MCF 10A (cell line): ENCODE measurements at regions of chr2 and their contacts with region 1.

Region 1: DNA sequence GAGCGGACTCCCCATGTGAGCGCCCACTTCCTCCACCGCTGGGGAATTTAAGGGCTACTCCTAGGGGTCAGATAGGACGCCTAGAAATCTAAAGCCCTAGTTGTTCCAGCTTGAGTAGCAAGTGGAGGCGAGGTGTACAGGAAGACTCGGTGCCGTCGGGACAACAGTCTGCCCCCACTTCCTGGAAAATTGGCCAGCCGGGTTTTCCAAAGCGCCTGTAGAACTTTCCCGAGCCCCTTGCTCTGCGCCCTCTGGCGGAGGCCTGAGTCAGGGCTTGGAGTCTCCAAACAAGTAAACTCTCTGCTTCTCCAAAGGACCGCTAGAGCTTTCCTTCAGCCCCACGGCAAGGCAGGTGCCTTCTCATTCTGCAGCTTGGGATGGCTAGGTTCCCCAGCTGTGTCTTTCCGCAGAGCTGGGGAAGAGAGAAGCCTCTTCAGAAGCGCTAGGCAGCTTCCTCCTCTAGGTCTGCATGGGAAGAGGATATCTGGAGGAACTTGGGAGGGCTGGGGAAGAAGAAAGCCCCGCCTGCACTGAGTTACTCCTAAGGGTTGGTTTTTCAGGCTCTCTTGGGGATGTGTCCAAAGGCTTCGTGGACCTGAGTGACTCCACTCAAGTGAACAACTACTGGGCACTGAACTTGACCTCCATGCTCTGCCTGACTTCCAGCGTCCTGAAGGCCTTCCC is 688 bp downstream of the SPR start:
- DNase-seq: peak; percentile 92
- H3K4me3 Mint-ChIP-seq: peak overlapping the region; percentile 75
- H3K27ac Mint-ChIP-seq: no peak overlapping the region
- H3K4me1 Mint-ChIP-seq: peaks cover 26% of the 10 kb centered on the region
- H3K27me3 Mint-ChIP-seq: no peaks in the 10 kb centered on the region
- CTCF ChIP-seq: peak; percentile 75

Region 2: GRCh38 chr2:71530641-71531332 is 1357.1 kb before region 1 on chr2:
- CTCF ChIA-PET with region 1: no interaction called
- POLR2A ChIA-PET with region 1: no interaction called
- intact Hi-C with region 1: loop called (anchors 5 kb)
- DNase-seq: peak; percentile 58
- H3K4me3 Mint-ChIP-seq: no peak overlapping the region
- H3K27ac Mint-ChIP-seq: no peak overlapping the region
- H3K4me1 Mint-ChIP-seq: peaks cover 4% of the 10 kb centered on the region
- H3K27me3 Mint-ChIP-seq: peaks cover 28% of the 10 kb centered on the region
- CTCF ChIP-seq: peak; percentile 58

Region 3: DNA sequence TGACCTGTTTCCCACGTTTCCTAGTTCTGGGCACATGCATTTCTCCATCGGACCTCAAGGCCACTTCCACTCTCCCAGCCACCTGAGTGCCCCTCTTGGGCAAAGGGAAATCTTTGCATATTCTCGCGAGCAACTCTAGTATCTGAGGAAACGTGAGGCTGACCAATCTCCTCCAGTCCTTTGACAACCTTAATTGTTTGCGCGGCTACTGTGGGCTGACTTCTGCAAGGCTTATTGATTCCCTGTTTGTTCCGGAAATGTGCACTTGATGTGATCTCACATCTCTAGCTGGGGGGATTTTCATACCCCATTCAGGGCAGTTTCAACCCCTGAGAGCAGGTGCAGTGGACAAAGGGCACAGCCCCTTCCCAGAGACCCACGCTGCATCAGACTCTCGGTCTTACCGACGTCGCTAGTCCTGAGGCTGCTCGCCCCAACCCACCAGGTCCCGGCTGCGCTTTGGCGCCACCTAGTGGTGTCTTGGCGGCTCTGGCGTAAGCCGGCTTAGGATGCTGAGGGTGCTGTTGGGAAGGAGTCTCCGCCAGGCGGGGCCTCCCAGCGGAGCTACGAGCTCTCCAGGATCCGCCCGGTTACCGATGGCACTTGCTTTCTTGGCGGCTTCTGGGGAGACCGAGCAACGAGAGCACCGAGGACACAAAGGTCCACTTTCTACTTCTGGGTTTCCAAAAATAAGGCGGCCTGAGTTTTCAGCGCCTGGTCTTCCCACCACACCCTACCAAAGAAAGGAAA is 25.5 kb before region 1 on chr2:
- CTCF ChIA-PET with region 1: interaction called, 45 read pairs
- POLR2A ChIA-PET with region 1: interaction called, 6 read pairs
- intact Hi-C with region 1: no loop called
- DNase-seq: peak; percentile 89
- H3K4me3 Mint-ChIP-seq: peak overlapping the region; percentile 41
- H3K27ac Mint-ChIP-seq: no peak overlapping the region
- H3K4me1 Mint-ChIP-seq: peaks cover 7% of the 10 kb centered on the region
- H3K27me3 Mint-ChIP-seq: peaks cover 28% of the 10 kb centered on the region
- CTCF ChIP-seq: peak; percentile 87

Region 4: GRCh38 chr2:72901426-72901825 is 13.5 kb after region 1 on chr2:
- CTCF ChIA-PET with region 1: interaction called, 20 read pairs
- POLR2A ChIA-PET with region 1: no interaction called
- intact Hi-C with region 1: no loop called
- DNase-seq: no peak
- H3K4me3 Mint-ChIP-seq: no peak overlapping the region
- H3K27ac Mint-ChIP-seq: no peak overlapping the region
- H3K4me1 Mint-ChIP-seq: no peaks in the 10 kb centered on the region
- H3K27me3 Mint-ChIP-seq: peaks cover 57% of the 10 kb centered on the region
- CTCF ChIP-seq: no peak

Region 5: GRCh38 chr2:72934683-72935610 is 47.1 kb after region 1 on chr2:
- CTCF ChIA-PET with region 1: interaction called, 3 read pairs
- POLR2A ChIA-PET with region 1: no interaction called
- intact Hi-C with region 1: loop called (anchors 1 kb)
- DNase-seq: peak; percentile 57
- H3K4me3 Mint-ChIP-seq: no peak overlapping the region
- H3K27ac Mint-ChIP-seq: no peak overlapping the region
- H3K4me1 Mint-ChIP-seq: no peaks in the 10 kb centered on the region
- H3K27me3 Mint-ChIP-seq: no peaks in the 10 kb centered on the region
- CTCF ChIP-seq: peak; percentile 43

Region 6: GRCh38 chr2:73071360-73072133 is 183.7 kb after region 1 on chr2 and contains the start of gene SFXN5:
- CTCF ChIA-PET with region 1: interaction called, 4 read pairs
- POLR2A ChIA-PET with region 1: no interaction called
- intact Hi-C with region 1: loop called (anchors 5 kb)
- DNase-seq: peak; percentile 97
- H3K4me3 Mint-ChIP-seq: peak within 1 kb of the TSS; percentile 88
- H3K27ac Mint-ChIP-seq: peak within 1 kb of the TSS; percentile 88
- H3K4me1 Mint-ChIP-seq: peaks cover 34% of the 10 kb centered on the region
- H3K27me3 Mint-ChIP-seq: no peaks in the 10 kb centered on the region
- CTCF ChIP-seq: no peak
- total RNA-seq, gene SFXN5: 6.0 and 8.0 TPM in 2 replicates

Region 7: DNA sequence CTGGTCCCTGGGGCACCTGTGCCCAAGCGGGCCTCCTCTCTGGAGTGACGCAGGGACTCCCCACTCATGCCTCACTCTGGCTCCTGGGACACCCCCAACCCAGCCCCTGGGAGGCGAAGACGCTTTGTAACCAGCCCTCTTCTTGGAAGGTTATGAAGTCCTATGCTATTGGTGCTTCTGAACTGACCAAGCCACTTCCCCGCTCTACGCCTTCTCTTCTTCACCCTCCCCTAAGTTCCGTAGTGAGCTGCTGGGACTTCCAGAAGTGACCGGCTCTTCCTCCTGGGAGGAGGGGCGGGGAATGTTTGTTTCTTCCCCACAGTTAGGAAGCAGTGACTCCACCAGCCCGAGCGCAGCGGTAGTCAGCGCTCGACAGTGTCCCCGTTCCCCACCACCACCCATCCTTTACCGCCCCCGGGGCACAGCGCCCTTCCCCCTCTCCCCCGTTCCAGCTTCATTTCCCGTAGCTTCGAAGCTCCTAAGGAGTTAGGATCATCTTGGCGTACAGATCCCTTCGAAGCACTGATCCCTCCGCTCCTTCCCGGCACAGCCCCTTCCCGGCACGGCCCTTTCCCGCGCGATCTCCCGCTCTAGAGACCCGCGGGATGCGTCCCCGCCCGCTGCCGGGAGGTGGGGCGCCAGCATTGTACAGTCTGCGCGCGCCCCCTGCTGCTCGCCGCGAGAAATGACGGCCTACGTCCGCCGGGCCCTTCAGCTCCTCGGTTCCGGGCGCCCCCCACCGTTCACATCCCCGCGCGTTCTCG is 289.2 kb after region 1 on chr2:
- CTCF ChIA-PET with region 1: interaction called, 42 read pairs
- POLR2A ChIA-PET with region 1: no interaction called
- intact Hi-C with region 1: loop called (anchors 1 kb)
- DNase-seq: peak; percentile 78
- H3K4me3 Mint-ChIP-seq: peak overlapping the region; percentile 86
- H3K27ac Mint-ChIP-seq: no peak overlapping the region
- H3K4me1 Mint-ChIP-seq: peaks cover 9% of the 10 kb centered on the region
- H3K27me3 Mint-ChIP-seq: peaks cover 48% of the 10 kb centered on the region
- CTCF ChIP-seq: peak; percentile 97